ENCODE measurements at regions of chr7 and their contacts with region 1.

Region 1: GRCh38 chr7:129298268-129298893 is 73.6 kb downstream of the AHCYL2 start:
- DNase-seq: peak; percentile 75
- ATAC-seq: no peak
- H3K4me3 Mint-ChIP-seq: no peak overlapping the region
- H3K27ac Mint-ChIP-seq: no peak overlapping the region
- H3K4me1 Mint-ChIP-seq: peaks cover 2% of the 10 kb centered on the region
- H3K27me3 Mint-ChIP-seq: no peaks in the 10 kb centered on the region

Region 2: DNA sequence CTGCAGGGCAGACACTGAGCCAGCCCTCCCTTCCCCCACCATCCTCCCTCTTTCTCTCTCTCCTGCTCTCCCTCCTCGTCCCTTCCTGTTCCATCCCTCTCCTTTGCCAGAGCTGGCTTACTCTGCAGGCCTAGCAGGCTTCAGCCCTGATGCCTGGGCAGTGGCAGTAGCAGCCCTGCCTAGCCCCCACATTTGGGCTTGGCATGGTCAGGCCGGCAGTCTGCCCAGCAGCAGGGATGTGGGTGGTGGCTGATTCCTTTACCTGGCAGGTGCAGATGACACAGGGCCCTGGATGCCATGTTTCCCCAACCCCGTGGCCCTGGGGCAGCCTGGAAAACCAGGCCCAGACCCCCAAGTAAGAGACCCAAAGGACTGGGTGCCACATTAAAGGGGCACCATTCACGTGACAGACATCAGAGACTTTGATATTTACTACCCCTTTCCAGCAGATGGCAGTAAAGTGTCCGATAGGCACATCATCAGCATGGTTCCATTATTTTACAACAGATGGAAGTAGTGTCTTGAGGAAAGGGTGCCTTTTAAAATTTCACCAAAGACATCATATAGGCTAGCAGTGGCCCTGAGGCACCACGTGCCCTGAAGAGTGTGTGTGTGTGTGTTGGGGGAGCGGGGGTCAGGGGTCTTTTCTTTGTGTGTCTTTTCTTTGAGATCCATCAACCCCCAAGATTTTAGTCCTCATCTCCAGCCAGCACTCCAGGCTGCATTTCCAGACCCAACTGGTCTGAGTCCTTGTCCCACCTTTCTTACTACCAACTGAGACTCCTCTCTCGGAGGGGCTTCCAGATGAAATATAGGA is 393.8 kb before region 1 on chr7:
- CTCF ChIA-PET with region 1: no interaction called
- POLR2A ChIA-PET with region 1: no interaction called
- intact Hi-C with region 1: loop called in 1 of 2 experiments (anchors 10 kb)
- DNase-seq: no peak
- ATAC-seq: peak; percentile 89
- H3K4me3 Mint-ChIP-seq: no peak overlapping the region
- H3K27ac Mint-ChIP-seq: no peak overlapping the region
- H3K4me1 Mint-ChIP-seq: peaks cover 3% of the 10 kb centered on the region
- H3K27me3 Mint-ChIP-seq: peaks cover 19% of the 10 kb centered on the region

Region 3: GRCh38 chr7:129285111-129285510 is 13.3 kb before region 1 on chr7:
- CTCF ChIA-PET with region 1: interaction called, 22 read pairs
- POLR2A ChIA-PET with region 1: no interaction called
- intact Hi-C with region 1: no loop called
- DNase-seq: no peak
- ATAC-seq: no peak
- H3K4me3 Mint-ChIP-seq: no peak overlapping the region
- H3K27ac Mint-ChIP-seq: no peak overlapping the region
- H3K4me1 Mint-ChIP-seq: no peaks in the 10 kb centered on the region
- H3K27me3 Mint-ChIP-seq: no peaks in the 10 kb centered on the region